CD8-positive, alpha-beta T cell (primary cell): ENCODE measurements at regions of chr4 and their contacts with region 1.

Region 1: DNA sequence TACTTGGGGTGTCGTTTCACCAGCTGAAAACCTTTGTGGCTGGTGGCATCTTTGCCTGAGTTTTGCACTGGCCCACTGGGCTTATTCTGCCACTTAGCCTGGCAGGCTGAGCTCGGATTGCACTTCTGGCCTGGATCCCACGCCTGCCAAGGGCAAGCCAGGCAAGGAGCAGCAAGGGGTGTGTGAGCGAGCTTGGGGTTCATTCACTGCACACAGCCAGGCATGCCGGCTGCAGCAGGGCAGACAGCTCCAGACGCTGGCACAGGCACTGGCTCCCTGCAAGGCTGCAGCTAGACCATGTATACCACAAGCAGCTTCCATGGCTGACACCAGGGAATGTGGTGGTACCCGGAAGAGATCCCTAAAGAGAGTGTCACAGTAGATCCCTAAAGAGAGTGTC is 476.3 kb downstream of the EPHA5 start:
- DNase-seq: no peak
- ATAC-seq: no peak
- H3K4me3 ChIP-seq: no peak overlapping the region
- H3K4me3 Mint-ChIP-seq: no peak overlapping the region
- H3K27ac ChIP-seq: no peak overlapping the region
- H3K27ac Mint-ChIP-seq: no peak overlapping the region
- H3K4me1 ChIP-seq: no peaks in the 10 kb centered on the region
- H3K4me1 Mint-ChIP-seq: no peaks in the 10 kb centered on the region
- H3K27me3 ChIP-seq: no peaks in the 10 kb centered on the region
- H3K27me3 Mint-ChIP-seq: no peaks in the 10 kb centered on the region
- CTCF ChIP-seq: no peak

Region 2: DNA sequence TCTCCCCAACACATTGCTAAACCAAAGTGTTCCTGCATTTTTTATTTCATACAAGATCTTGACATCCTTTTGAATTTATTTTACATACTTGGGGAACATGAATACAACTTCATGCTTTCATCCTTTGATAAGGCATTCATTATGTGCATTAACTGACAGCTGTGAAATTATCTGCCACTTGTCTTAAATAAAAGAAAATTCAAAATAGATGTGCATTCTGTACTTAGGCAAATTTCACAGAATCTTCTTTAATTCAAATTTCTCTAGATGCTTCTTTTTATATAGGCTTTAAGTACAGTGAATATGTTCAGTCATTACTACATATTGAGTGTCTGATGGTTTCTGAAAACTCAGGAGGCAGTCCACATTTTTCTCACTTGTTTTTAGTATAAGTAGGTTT is 41.8 kb before region 1 on chr4:
- CTCF ChIA-PET with region 1: no interaction called
- POLR2A ChIA-PET with region 1: no interaction called
- intact Hi-C with region 1: loop called in 1 of 2 experiments (anchors 5 kb)
- DNase-seq: no peak
- ATAC-seq: no peak
- H3K4me3 ChIP-seq: no peak overlapping the region
- H3K4me3 Mint-ChIP-seq: no peak overlapping the region
- H3K27ac ChIP-seq: no peak overlapping the region
- H3K27ac Mint-ChIP-seq: no peak overlapping the region
- H3K4me1 ChIP-seq: no peaks in the 10 kb centered on the region
- H3K4me1 Mint-ChIP-seq: no peaks in the 10 kb centered on the region
- H3K27me3 ChIP-seq: no peaks in the 10 kb centered on the region
- H3K27me3 Mint-ChIP-seq: no peaks in the 10 kb centered on the region
- CTCF ChIP-seq: no peak